ENCODE measurements at regions of chr11 and their contacts with region 1.

Region 1: DNA sequence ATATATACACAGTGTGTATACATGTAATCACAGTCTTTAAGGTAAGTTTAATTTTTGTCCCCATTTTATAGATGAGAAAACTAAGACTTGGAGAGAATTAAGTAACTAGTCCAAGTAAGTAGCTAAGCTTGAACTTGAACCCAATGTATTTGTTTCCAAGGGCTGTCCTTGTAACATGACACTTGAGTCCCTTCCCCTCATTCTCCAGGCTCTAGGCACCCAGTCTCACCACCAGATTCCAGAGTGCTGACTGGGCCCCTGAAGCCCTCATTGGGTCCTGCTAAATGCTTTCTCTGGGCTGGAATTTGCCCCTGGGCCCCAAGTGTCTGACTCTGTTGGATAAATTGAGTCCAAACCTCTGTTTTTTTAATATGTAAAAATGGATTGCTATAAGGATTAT is 45.5 kb downstream of the ADM start:
- DNase-seq: no peak
- ATAC-seq: no peak
- H3K4me3 Mint-ChIP-seq: no peak overlapping the region
- H3K27ac Mint-ChIP-seq: no peak overlapping the region
- H3K4me1 Mint-ChIP-seq: no peaks in the 10 kb centered on the region
- H3K27me3 Mint-ChIP-seq: peaks cover 15% of the 10 kb centered on the region

Region 2: GRCh38 chr11:10366568-10367370 is 16.4 kb after region 1 on chr11:
- CTCF ChIA-PET with region 1: interaction called, 10 read pairs
- POLR2A ChIA-PET with region 1: no interaction called
- DNase-seq: peak; percentile 73
- ATAC-seq: peak; percentile 68
- H3K4me3 Mint-ChIP-seq: no peak overlapping the region
- H3K27ac Mint-ChIP-seq: no peak overlapping the region
- H3K4me1 Mint-ChIP-seq: peaks cover 7% of the 10 kb centered on the region
- H3K27me3 Mint-ChIP-seq: peaks cover 14% of the 10 kb centered on the region

Measured in activated CD8-positive, alpha-beta T cell treated with anti-CD3 and anti-CD28 coated beads, Interleukin-2, amount 10 ng/mL, durations not matched to agents 7 days and 5 days (primary cell).